GM12878 (cell line): ENCODE measurements at regions of chr11 and their contacts with region 1.

Region 1: GRCh38 chr11:64652586-64653387 is 61.8 kb downstream of the SLC22A12 start:
- DNase-seq: no peak
- ATAC-seq: peak; percentile 82
- H3K4me3 ChIP-seq: no peak overlapping the region
- H3K27ac ChIP-seq: no peak overlapping the region
- H3K4me1 ChIP-seq: peaks cover 9% of the 10 kb centered on the region
- H3K27me3 ChIP-seq: peaks cover 0 to 4% of the 10 kb centered on the region in 2 experiments; a peak in 1 of 4 replicates
- CTCF ChIP-seq: peak; percentile 78 to 92 (median 89)
- EP300 ChIP-seq: no peak
- POLR2A ChIP-seq: no peak
- RAD21 ChIP-seq: peak; percentile 82

Region 2: DNA sequence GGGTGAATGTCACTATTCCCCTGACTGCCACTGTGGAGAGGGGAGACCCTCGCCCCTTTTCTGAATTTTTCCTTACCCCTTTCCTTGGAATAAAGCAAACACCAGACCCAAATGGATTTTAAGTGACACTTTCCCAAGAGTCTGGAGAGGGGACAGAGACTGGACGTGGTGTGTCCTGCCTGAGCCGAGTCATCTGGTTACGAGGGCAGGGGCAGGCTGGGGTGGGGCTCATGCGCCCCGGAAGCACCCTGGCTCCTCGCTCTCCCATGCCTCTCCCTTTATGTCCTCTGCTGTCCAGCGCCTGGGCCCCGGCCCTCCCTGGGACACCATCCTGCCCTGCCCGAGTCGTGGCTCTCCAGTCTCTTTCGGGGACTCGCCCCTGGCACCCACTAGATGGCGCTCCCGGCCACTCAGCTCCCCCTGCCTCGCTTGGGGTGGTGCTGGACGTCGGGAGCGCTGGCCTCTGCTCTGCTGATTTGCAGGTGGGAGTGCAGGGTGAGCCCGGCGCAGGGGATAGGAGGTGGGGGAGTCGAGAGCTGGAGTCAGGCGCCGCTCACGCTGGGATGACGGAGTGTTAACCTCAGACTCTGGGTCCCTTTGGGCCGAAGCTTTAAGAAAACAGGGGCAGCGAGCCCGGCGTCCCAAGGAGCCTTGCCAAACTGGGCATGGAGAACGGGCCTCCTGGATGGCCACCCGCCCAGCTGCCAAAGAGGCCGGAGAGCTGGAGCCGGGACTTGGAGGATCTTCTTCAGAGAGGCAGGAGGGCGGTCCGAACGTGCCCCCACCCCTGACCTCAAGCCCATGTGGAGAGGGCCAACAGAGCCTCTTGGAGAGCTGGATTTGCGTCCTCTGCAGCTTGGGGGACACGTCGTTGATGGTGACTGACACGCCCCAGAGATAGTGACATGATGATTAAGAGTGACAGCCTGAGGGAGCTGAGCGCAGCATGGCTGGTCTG is 203.9 kb before region 1 on chr11:
- CTCF ChIA-PET with region 1: interaction called, 52 read pairs
- POLR2A ChIA-PET with region 1: no interaction called
- RAD21 ChIA-PET with region 1: interaction called, 20 read pairs
- SMC1A ChIA-PET with region 1: interaction called, 6 read pairs
- in situ Hi-C with region 1: no loop called
- intact Hi-C with region 1: loop called (anchors 2 kb)
- DNase-seq: no peak
- ATAC-seq: peak; percentile 95
- H3K4me3 ChIP-seq: peak overlapping the region; percentile 67
- H3K27ac ChIP-seq: peak overlapping the region; percentile 58
- H3K4me1 ChIP-seq: peaks cover 21% of the 10 kb centered on the region
- H3K27me3 ChIP-seq: 0 out of 4 replicates have a peak, but pooled peaks cover 0 to 2% of the 10 kb centered on the region in 2 experiments
- CTCF ChIP-seq: peak; percentile 80 to 90 (median 90)
- EP300 ChIP-seq: no peak
- POLR2A ChIP-seq: no peak
- RAD21 ChIP-seq: peak; percentile 56

Region 3: GRCh38 chr11:64539711-64540427 is 112.9 kb before region 1 on chr11:
- CTCF ChIA-PET with region 1: no interaction called
- POLR2A ChIA-PET with region 1: no interaction called
- RAD21 ChIA-PET with region 1: no interaction called
- SMC1A ChIA-PET with region 1: no interaction called
- in situ Hi-C with region 1: no loop called
- intact Hi-C with region 1: no loop called
- DNase-seq: no peak
- ATAC-seq: no peak
- H3K4me3 ChIP-seq: no peak overlapping the region
- H3K27ac ChIP-seq: no peak overlapping the region
- H3K4me1 ChIP-seq: no peaks in the 10 kb centered on the region
- H3K27me3 ChIP-seq: peaks cover 1 to 11% of the 10 kb centered on the region in 2 experiments
- CTCF ChIP-seq: no peak
- EP300 ChIP-seq: no peak
- POLR2A ChIP-seq: no peak
- RAD21 ChIP-seq: no peak

Region 4: GRCh38 chr11:64553551-64554201 is 99.1 kb before region 1 on chr11:
- CTCF ChIA-PET with region 1: interaction called, 6 read pairs
- POLR2A ChIA-PET with region 1: no interaction called
- RAD21 ChIA-PET with region 1: interaction called, 4 read pairs
- SMC1A ChIA-PET with region 1: interaction called, 3 read pairs
- in situ Hi-C with region 1: no loop called
- intact Hi-C with region 1: loop called (anchors 1 kb)
- DNase-seq: no peak
- ATAC-seq: peak; percentile 67
- H3K4me3 ChIP-seq: no peak overlapping the region
- H3K27ac ChIP-seq: no peak overlapping the region
- H3K4me1 ChIP-seq: no peaks in the 10 kb centered on the region
- H3K27me3 ChIP-seq: peaks cover 0 to 2% of the 10 kb centered on the region in 2 experiments; a peak in 1 of 4 replicates
- CTCF ChIP-seq: peak; percentile 86 to 97 (median 95)
- EP300 ChIP-seq: no peak
- POLR2A ChIP-seq: no peak
- RAD21 ChIP-seq: peak; percentile 67

Region 5: GRCh38 chr11:64675450-64676260 is 22.9 kb after region 1 on chr11:
- CTCF ChIA-PET with region 1: interaction called, 79 read pairs
- POLR2A ChIA-PET with region 1: no interaction called
- RAD21 ChIA-PET with region 1: interaction called, 9 read pairs
- SMC1A ChIA-PET with region 1: interaction called, 18 read pairs
- in situ Hi-C with region 1: no loop called
- intact Hi-C with region 1: no loop called
- DNase-seq: no peak
- ATAC-seq: peak; percentile 76
- H3K4me3 ChIP-seq: no peak overlapping the region
- H3K27ac ChIP-seq: no peak overlapping the region
- H3K4me1 ChIP-seq: peaks cover 28% of the 10 kb centered on the region
- H3K27me3 ChIP-seq: peaks cover 2 to 4% of the 10 kb centered on the region in 2 experiments; a peak in 3 of 4 replicates
- CTCF ChIP-seq: no peak
- EP300 ChIP-seq: no peak
- POLR2A ChIP-seq: no peak
- RAD21 ChIP-seq: no peak

Region 6: GRCh38 chr11:64703048-64703447 is 50.3 kb after region 1 on chr11:
- CTCF ChIA-PET with region 1: interaction called, 13 read pairs
- POLR2A ChIA-PET with region 1: no interaction called
- RAD21 ChIA-PET with region 1: interaction called, 6 read pairs
- SMC1A ChIA-PET with region 1: interaction called, 4 read pairs
- in situ Hi-C with region 1: no loop called
- intact Hi-C with region 1: no loop called
- DNase-seq: no peak
- ATAC-seq: no peak
- H3K4me3 ChIP-seq: no peak overlapping the region
- H3K27ac ChIP-seq: no peak overlapping the region
- H3K4me1 ChIP-seq: no peaks in the 10 kb centered on the region
- H3K27me3 ChIP-seq: peaks cover 0 to 2% of the 10 kb centered on the region in 2 experiments; a peak in 2 of 4 replicates
- CTCF ChIP-seq: no peak
- EP300 ChIP-seq: no peak
- POLR2A ChIP-seq: no peak
- RAD21 ChIP-seq: no peak

Region 7: DNA sequence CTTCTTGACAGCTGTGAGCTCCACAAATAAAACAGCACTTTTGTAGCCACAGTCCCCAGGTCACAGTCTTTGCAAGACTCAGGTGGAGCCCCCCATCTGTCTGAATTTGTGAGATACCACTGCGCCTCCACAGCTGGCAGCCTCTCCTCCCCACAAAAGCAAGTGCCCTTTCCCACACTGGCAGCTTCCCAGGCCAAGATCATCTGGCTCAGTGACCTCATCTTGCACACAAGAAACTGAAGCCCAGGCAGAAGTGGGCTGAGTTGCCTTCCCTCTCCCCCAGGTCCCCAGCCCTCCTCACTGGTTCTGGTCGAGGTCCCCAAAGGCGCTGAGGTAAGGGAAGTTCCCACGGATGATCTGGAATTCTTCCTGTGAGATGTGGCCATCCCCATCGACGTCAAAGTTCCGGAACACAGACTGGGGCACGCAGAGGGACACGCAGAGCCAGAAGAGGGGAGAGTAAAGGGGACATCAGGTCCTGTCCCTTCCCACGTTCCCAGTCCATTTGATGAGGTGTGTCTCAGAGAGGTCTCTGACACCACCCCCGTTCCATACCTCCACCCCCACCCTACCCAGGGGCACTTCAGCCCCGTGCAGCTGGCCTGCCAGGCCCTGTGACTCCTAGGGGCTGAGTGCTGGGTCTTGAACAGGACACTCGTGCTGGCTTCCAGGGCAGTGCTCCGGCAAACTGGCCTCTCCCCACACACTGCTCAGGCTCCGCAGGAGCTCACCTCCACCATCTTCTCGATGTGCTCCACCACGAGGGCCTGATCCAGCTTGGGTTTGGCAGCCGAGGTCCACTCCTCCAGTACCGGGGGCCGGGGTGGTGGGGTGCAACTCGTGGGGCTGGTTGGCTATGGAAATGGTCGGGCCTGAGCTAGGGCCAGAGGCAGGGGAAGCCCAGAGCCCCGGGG is 82.3 kb after region 1 on chr11:
- CTCF ChIA-PET with region 1: interaction called, 3 read pairs
- POLR2A ChIA-PET with region 1: no interaction called
- RAD21 ChIA-PET with region 1: interaction called, 5 read pairs
- SMC1A ChIA-PET with region 1: interaction called, 10 read pairs
- in situ Hi-C with region 1: no loop called
- intact Hi-C with region 1: no loop called
- DNase-seq: no peak
- ATAC-seq: no peak
- H3K4me3 ChIP-seq: no peak overlapping the region
- H3K27ac ChIP-seq: no peak overlapping the region
- H3K4me1 ChIP-seq: no peaks in the 10 kb centered on the region
- H3K27me3 ChIP-seq: no peaks in the 10 kb centered on the region
- CTCF ChIP-seq: no peak
- EP300 ChIP-seq: no peak
- POLR2A ChIP-seq: no peak
- RAD21 ChIP-seq: no peak